Body of pancreas (tissue), 4 donors: ENCODE measurements at regions of chr1 and their contacts with region 1.

Region 1: GRCh38 chr1:222464841-222465210 is 83.1 kb downstream of the HHIPL2 start:
- DNase-seq: peak; percentile 56 to 67 (median 64)
- ATAC-seq: peak; percentile 17
- H3K4me3 ChIP-seq: no peak overlapping the region
- H3K27ac ChIP-seq: peak overlapping the region; percentile 77 to 96 (median 91)
- H3K4me1 ChIP-seq: peaks cover 19% of the 10 kb centered on the region
- H3K27me3 ChIP-seq: no peaks in the 10 kb centered on the region
- CTCF ChIP-seq: no peak
- POLR2A ChIP-seq: no peak

Region 2: GRCh38 chr1:222387007-222387814 is 77.6 kb before region 1 on chr1:
- intact Hi-C with region 1: no loop called
- DNase-seq: no peak
- ATAC-seq: no peak
- H3K4me3 ChIP-seq: no peak overlapping the region
- H3K27ac ChIP-seq: no peak overlapping the region
- H3K4me1 ChIP-seq: no peaks in the 10 kb centered on the region
- H3K27me3 ChIP-seq: no peaks in the 10 kb centered on the region
- CTCF ChIP-seq: no peak
- POLR2A ChIP-seq: no peak

Region 3: GRCh38 chr1:222634180-222635013 is 169.6 kb after region 1 on chr1:
- intact Hi-C with region 1: loop called (anchors 5 kb)
- DNase-seq: peak; percentile 71 to 87 (median 78)
- ATAC-seq: peak; percentile 83
- H3K4me3 ChIP-seq: no peak overlapping the region
- H3K27ac ChIP-seq: no peak overlapping the region
- H3K4me1 ChIP-seq: no peaks in the 10 kb centered on the region
- H3K27me3 ChIP-seq: no peaks in the 10 kb centered on the region
- CTCF ChIP-seq: peak; percentile 73 to 91 (median 85)
- POLR2A ChIP-seq: no peak